ENCODE measurements at regions of chr2 and their contacts with region 1.

Region 1: DNA sequence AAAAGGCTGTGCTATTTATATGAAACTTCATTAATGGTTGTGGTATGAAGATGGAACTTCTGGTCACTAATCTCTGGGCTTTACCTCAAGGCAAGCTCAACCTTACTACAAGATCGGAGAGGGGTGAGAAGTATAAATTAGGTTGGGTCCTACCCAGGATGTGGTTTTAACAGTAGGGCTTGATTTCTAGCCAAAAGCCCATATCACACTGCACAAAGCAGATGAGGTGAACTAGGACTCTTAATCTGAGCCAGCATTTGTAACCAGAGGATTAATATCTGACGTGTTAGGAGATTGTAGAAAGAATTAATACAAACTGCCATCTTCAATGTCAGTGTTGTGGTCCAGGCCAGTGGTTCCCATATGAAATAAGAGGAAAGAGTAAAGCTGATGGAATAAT is 86.4 kb upstream of the RGPD4 start:
- DNase-seq: no peak
- H3K4me3 ChIP-seq: no peak overlapping the region
- H3K27ac ChIP-seq: no peak overlapping the region
- H3K4me1 ChIP-seq: no peaks in the 10 kb centered on the region
- H3K27me3 ChIP-seq: no peaks in the 10 kb centered on the region
- CTCF ChIP-seq: no peak
- POLR2A ChIP-seq: no peak

Region 2: GRCh38 chr2:107418708-107419107 is 321.6 kb before region 1 on chr2:
- intact Hi-C with region 1: loop called (anchors 5 kb)
- DNase-seq: no peak
- H3K4me3 ChIP-seq: no peak overlapping the region
- H3K27ac ChIP-seq: no peak overlapping the region
- H3K4me1 ChIP-seq: no peaks in the 10 kb centered on the region
- H3K27me3 ChIP-seq: no peaks in the 10 kb centered on the region
- CTCF ChIP-seq: no peak
- POLR2A ChIP-seq: no peak

Region 3: GRCh38 chr2:107717661-107718060 is 22.6 kb before region 1 on chr2:
- intact Hi-C with region 1: no loop called
- DNase-seq: no peak
- H3K4me3 ChIP-seq: no peak overlapping the region
- H3K27ac ChIP-seq: no peak overlapping the region
- H3K4me1 ChIP-seq: no peaks in the 10 kb centered on the region
- H3K27me3 ChIP-seq: no peaks in the 10 kb centered on the region
- CTCF ChIP-seq: no peak
- POLR2A ChIP-seq: no peak